WTC11 (cell line): ENCODE measurements at regions of chr22 and their contacts with region 1.

Region 1: GRCh38 chr22:43346521-43346929 is 3.4 kb upstream of the SCUBE1 start:
- DNase-seq: peak; percentile 87
- ATAC-seq: peak; percentile 80
- H3K4me3 Mint-ChIP-seq: no peak overlapping the region
- H3K27ac Mint-ChIP-seq: no peak overlapping the region
- H3K4me1 Mint-ChIP-seq: peaks cover 31% of the 10 kb centered on the region
- H3K27me3 Mint-ChIP-seq: peaks cover 43% of the 10 kb centered on the region
- CTCF ChIP-seq: peak; percentile 57; the same call in 1 of the 2 replicates

Region 2: GRCh38 chr22:43213051-43213450 is 133.5 kb before region 1 on chr22:
- CTCF ChIA-PET with region 1: interaction called, 13 read pairs
- POLR2A ChIA-PET with region 1: no interaction called
- DNase-seq: peak; percentile 60
- ATAC-seq: peak; percentile 92
- H3K4me3 Mint-ChIP-seq: no peak overlapping the region
- H3K27ac Mint-ChIP-seq: no peak overlapping the region
- H3K4me1 Mint-ChIP-seq: peaks cover 12% of the 10 kb centered on the region
- H3K27me3 Mint-ChIP-seq: no peaks in the 10 kb centered on the region
- CTCF ChIP-seq: no peak

Region 3: DNA sequence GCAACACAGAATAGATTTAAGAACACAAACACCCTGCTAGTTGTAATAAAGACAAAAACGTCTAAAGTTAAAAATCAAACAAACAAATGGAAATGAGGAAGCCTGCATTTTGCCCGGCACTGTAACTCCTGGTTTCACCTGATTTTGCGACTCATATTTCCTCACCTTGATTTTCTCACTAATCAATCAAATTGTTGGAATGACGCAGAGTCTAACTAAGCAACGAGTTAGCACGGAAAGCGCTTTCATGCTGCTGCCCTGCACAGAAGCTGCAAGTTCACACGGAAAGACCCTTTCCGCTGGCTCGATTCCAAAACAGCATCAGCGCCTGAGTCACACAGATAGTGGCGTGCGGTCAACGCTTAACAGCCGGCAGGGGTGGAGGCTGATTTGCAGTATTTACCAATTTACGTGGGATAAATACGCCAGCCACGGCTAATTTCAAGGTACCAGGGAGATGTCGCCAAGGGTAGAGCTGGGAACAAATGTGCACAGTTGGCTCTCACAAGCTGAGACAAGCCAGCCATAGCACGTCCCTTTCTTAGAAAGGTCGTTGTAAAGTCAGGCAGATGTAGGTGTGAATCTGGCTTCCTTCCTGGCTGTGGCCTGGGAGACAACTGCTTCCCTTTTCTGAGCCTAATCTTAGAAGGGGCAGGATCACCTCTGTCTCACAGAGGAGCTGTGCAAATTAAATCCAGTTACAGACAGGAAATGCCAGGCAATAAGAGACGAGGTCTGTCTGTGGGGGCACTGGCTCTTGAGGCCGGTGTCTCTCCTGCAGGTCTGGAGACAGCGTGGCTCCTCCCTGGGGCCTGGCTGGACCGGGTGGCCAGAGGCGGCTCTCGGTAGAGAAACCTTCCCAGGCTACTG is 82.6 kb before region 1 on chr22:
- CTCF ChIA-PET with region 1: interaction called, 486 read pairs
- POLR2A ChIA-PET with region 1: interaction called, 4 read pairs
- DNase-seq: no peak
- ATAC-seq: no peak
- H3K4me3 Mint-ChIP-seq: no peak overlapping the region
- H3K27ac Mint-ChIP-seq: peak overlapping the region; percentile 5; the same call in 1 of the 2 replicates
- H3K4me1 Mint-ChIP-seq: peaks cover 7% of the 10 kb centered on the region; the same call in 1 of the 2 replicates
- H3K27me3 Mint-ChIP-seq: no peaks in the 10 kb centered on the region
- CTCF ChIP-seq: no peak

Region 4: GRCh38 chr22:43302531-43303041 is 43.9 kb before region 1 on chr22:
- CTCF ChIA-PET with region 1: interaction called, 13 read pairs
- POLR2A ChIA-PET with region 1: no interaction called
- DNase-seq: no peak
- ATAC-seq: no peak
- H3K4me3 Mint-ChIP-seq: no peak overlapping the region
- H3K27ac Mint-ChIP-seq: no peak overlapping the region
- H3K4me1 Mint-ChIP-seq: 0 out of 2 replicates have a peak, but pooled peaks cover 2% of the 10 kb centered on the region
- H3K27me3 Mint-ChIP-seq: no peaks in the 10 kb centered on the region
- CTCF ChIP-seq: no peak

Region 5: DNA sequence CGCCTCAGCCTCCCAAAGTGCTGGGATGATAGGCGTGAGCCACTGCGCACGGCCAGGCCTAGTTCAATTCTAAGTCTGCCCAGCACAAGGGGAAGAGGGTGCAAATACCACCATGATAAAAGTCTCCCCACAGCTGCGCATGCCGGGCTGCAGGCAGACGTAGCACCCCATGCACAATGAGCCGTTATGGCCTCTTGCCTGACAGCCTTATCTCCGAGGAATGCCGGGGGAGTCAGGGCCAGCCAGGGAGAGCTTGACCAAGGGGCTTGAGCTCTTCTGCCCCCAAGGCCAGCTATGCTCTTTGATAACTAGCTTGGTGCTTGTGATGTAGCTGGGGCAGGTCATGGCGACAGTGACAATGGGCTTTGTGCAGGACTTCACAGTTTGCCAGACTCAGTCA is 10.4 kb after region 1 on chr22:
- CTCF ChIA-PET with region 1: interaction called, 28 read pairs
- POLR2A ChIA-PET with region 1: no interaction called
- DNase-seq: no peak
- ATAC-seq: no peak
- H3K4me3 Mint-ChIP-seq: no peak overlapping the region
- H3K27ac Mint-ChIP-seq: 0 out of 2 replicates have a peak overlapping the region, but pooled peaks have one; percentile 8
- H3K4me1 Mint-ChIP-seq: peaks cover 3% of the 10 kb centered on the region; the same call in 1 of the 2 replicates
- H3K27me3 Mint-ChIP-seq: no peaks in the 10 kb centered on the region; the same call in 1 of the 2 replicates
- CTCF ChIP-seq: no peak

Region 6: GRCh38 chr22:43377896-43378704 is 31.6 kb after region 1 on chr22:
- CTCF ChIA-PET with region 1: interaction called, 14 read pairs
- POLR2A ChIA-PET with region 1: no interaction called
- DNase-seq: no peak
- ATAC-seq: no peak
- H3K4me3 Mint-ChIP-seq: no peak overlapping the region
- H3K27ac Mint-ChIP-seq: no peak overlapping the region
- H3K4me1 Mint-ChIP-seq: no peaks in the 10 kb centered on the region
- H3K27me3 Mint-ChIP-seq: peaks cover 9% of the 10 kb centered on the region; the same call in 1 of the 2 replicates
- CTCF ChIP-seq: no peak

Region 7: DNA sequence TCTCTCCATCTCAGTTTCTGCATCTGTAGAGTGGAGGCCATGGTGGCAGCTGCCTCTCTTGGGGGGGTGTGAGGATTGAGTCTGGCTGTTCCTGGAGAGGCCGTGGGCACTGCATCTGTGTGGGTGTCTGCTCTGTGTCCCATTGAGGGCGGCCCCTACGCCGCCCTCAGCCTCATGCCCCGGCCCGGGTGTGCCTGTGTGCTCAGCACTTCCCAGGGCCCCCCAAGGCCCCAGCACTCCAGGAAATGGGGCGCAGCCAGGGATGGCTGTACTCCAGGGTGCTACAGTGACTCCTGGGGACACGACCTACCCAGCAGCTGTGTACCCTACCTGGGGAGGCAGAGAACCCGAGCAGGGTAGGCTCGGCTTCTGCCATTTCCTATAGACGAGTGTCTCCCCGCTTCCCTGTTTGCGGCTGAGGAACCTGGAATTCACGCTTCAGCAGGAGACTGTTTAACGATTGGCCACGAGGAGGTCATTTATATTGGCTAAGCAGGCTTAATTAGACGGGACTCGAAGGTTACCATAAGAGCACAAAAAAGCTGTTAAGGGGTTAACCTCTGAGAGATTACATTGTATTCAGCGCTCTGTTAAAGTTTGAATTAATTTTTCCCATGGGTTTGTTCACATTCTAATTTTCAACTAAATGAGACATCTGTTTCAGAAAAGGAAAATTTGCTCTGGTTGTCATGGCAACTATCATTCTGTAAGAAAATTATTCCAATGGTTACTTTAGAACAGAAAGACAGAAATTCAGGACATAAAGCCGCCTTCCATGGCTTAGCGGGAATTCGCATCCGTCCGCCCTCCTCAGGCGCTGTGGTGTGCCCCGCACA is 141.7 kb after region 1 on chr22:
- CTCF ChIA-PET with region 1: no interaction called
- POLR2A ChIA-PET with region 1: no interaction called
- DNase-seq: no peak
- ATAC-seq: no peak
- H3K4me3 Mint-ChIP-seq: no peak overlapping the region
- H3K27ac Mint-ChIP-seq: no peak overlapping the region
- H3K4me1 Mint-ChIP-seq: no peaks in the 10 kb centered on the region
- H3K27me3 Mint-ChIP-seq: no peaks in the 10 kb centered on the region; the same call in 1 of the 2 replicates
- CTCF ChIP-seq: no peak